ENCODE measurements at regions of chr2 and their contacts with region 1.

Region 1: DNA sequence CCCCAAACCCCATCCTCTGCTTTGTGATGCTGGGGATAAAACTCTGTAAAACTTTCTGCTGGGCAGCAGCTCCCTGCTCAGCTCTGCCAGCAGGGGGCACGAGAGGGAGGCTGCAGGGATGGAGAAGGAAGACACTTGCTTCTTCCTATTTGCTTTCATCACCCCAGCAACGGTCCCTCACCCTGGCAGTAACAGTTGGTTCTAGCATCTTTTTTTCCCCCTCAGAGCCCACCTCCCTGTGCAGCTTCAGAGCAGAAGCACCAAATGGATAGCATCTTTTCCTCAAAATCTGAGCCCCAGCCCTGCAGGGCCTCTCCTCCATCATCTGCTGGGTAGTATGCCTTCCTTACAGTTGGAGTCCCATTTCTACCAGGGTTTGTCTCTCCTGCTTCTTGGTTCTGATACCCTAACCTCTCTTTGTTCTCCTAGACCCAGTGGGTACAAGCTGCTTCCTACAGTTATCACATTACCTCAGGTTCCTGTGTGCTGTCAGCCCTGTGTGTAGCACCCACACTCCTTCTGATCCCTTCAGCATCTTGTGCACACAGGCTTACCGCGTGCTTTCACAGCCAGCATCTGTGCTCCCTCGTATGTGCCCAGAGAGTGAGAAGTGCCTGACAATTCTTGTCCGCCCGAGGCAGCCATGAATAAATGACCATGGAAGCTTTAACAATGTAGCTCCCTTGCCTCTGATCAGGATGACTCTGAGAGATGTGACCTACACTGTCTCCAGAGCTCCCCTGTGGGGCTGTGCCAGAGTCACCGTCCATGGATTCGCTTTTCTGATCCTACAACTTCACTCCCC is 14.5 kb downstream of the CKAP2L start:
- DNase-seq: peak; percentile 60 to 92 (median 84)

Region 2: GRCh38 chr2:112321375-112322320 is 428.3 kb before region 1 on chr2:
- intact Hi-C with region 1: no loop called
- DNase-seq: no peak

Region 3: DNA sequence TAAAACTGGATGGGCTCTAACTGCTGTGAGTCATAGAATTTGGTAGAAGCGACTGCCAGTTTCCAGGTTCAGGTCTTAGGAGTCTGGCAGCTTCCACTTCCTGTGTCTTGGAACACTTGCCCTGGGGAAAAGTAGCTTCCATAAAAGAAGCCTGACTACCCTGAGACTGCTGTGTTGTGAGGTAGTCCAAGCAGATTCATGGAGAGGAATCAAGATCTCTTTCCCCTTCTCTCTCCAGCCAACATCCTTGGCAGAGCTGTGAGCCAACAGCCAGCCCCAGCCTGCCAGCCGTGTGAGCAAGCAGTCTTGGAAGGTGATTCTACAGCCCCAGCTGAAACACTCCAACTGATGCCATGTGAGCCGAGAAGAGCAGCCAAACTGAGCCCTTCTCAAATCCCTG is 70.5 kb before region 1 on chr2:
- intact Hi-C with region 1: no loop called
- DNase-seq: peak in 20 of 42 donors; percentile 21 to 72 (median 40)

Region 4: DNA sequence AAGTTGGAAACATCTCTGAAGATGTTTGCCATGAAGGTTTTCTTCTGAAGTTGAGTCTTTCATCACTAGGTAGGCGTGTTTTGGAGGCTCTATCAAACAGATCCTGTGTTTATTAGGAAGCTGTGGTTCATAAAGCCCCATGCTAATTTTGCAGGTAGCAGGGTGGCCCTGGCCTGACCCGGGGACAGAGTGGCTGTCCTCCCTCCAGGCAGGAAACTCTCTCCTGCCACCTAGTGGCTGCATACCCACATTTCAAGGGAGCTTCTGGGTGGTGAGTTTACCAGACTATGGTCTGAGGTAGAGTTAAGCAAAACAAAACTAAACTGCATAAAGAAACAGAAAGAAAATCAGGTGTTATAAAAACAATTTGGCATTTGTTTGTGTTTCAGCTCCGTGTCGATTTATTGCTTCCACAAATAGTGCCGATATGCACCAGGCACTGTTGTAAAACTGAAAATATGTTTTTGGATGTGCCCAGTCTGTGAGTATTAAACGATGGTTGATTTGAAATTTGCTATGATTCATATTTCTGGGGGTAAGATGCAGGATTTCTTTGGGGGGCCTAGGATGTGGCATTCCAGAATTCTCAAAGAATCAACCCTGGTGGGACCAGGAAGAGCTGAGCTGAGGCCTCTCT is 135.0 kb after region 1 on chr2:
- intact Hi-C with region 1: loop called (anchors 5 kb)
- DNase-seq: peak in 35 of 42 donors; percentile 16 to 84 (median 61)

Region 5: DNA sequence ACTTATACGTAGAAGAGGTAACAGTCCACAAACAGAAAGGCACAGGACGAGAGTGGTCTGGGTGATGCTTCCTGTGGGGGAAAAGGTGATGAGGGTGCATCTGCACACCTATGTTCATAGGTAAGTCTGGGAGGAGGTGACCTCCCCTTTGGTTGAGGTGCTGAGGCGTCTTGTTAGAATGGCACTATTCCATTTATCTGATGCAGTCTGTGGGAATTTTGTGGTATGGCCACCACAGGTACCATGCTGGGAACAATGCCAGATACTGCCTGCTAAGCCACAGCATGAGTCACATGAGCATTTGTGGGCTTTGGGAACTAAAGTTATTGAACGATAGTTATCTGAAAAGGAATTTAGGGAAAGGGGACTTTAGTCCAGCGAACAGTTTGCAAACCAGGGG is 188.9 kb after region 1 on chr2:
- intact Hi-C with region 1: loop called (anchors 5 kb)
- DNase-seq: no peak